ENCODE measurements at regions of chr3 and their contacts with region 1.

Region 1: GRCh38 chr3:152281133-152281713 is 12.5 kb downstream of the MBNL1 start:
- DNase-seq: no peak
- ATAC-seq: no peak
- H3K4me3 ChIP-seq: peak overlapping the region; percentile 34
- H3K4me3 Mint-ChIP-seq: peak overlapping the region; percentile 79
- H3K27ac ChIP-seq: peak overlapping the region; percentile 2 to 53
- H3K27ac Mint-ChIP-seq: peak overlapping the region; percentile 82
- H3K4me1 ChIP-seq: peaks cover 31% of the 10 kb centered on the region
- H3K4me1 Mint-ChIP-seq: peaks cover 86% of the 10 kb centered on the region
- H3K27me3 ChIP-seq: no peaks in the 10 kb centered on the region
- H3K27me3 Mint-ChIP-seq: no peaks in the 10 kb centered on the region
- CTCF ChIP-seq: no peak

Region 2: GRCh38 chr3:152291649-152292066 is 10.4 kb after region 1 on chr3:
- CTCF ChIA-PET with region 1: interaction called, 9 read pairs
- POLR2A ChIA-PET with region 1: interaction called, 9 read pairs
- intact Hi-C with region 1: loop called (anchors 2 kb)
- DNase-seq: peak in 2 of 14 experiments; percentile 39 to 57
- ATAC-seq: peak; percentile 46
- H3K4me3 ChIP-seq: no peak overlapping the region
- H3K4me3 Mint-ChIP-seq: peak overlapping the region; percentile 40
- H3K27ac ChIP-seq: peak overlapping the region; percentile 35 to 49
- H3K27ac Mint-ChIP-seq: peak overlapping the region; percentile 82
- H3K4me1 ChIP-seq: peaks cover 43% of the 10 kb centered on the region
- H3K4me1 Mint-ChIP-seq: peaks cover 84% of the 10 kb centered on the region
- H3K27me3 ChIP-seq: no peaks in the 10 kb centered on the region
- H3K27me3 Mint-ChIP-seq: no peaks in the 10 kb centered on the region
- CTCF ChIP-seq: no peak

Region 3: GRCh38 chr3:152331018-152331541 is 49.9 kb after region 1 on chr3:
- CTCF ChIA-PET with region 1: no interaction called
- POLR2A ChIA-PET with region 1: interaction called, 6 read pairs
- intact Hi-C with region 1: loop called in 1 of 2 experiments (anchors 5 kb)
- DNase-seq: no peak
- ATAC-seq: no peak
- H3K4me3 ChIP-seq: no peak overlapping the region
- H3K4me3 Mint-ChIP-seq: peak overlapping the region; percentile 40
- H3K27ac ChIP-seq: peak overlapping the region; percentile 0 to 12
- H3K27ac Mint-ChIP-seq: peak overlapping the region; percentile 47
- H3K4me1 ChIP-seq: peaks cover 36% of the 10 kb centered on the region
- H3K4me1 Mint-ChIP-seq: peaks cover 92% of the 10 kb centered on the region
- H3K27me3 ChIP-seq: no peaks in the 10 kb centered on the region
- H3K27me3 Mint-ChIP-seq: no peaks in the 10 kb centered on the region
- CTCF ChIP-seq: no peak